Prostate gland (tissue), 2 donors: ENCODE measurements at regions of chr11 and their contacts with region 1.

Region 1: DNA sequence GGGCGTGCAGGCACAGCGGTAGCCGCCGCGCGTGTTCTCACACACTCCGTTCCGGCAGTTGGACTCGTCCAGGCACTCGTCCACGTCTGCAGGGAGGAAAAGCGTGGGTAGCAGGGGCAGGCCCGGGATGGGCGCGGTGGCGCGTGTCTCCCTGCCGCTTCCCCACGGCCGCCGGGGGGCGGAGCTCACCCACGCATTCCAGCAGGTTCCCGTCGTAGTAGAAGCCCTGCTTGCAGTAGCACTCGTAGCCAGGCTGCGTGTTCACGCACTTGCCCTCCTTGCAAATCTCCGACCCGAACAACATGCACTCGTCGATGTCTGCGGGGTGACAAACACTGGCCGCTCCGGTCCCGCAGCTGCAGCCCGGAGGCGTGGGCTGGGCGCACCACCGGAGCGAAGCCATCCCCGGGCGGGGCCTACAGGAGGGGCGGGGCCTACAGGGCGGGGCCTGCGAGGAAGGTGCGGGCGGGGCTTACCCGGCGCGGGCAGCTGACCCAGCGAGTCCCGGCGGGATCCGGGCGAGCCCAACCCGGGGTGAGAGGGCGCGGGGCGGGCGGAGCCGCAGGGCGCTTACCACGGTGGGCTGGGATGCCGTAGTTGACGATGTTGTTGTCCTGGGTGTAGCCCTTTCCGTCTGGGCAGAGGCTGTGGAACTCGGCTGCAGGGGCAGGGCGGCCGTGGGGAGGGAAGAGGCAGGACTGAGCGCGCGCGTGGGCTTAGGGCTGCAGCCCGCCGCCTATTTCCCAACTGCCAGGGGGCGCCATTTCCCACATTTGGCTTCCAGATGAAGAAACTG is 15.6 kb downstream of the SCYL1 start:
- DNase-seq: peak; percentile 84
- H3K4me3 ChIP-seq: peak overlapping the region; percentile 45 to 50
- H3K27ac ChIP-seq: peak overlapping the region; percentile 80 to 89
- H3K4me1 ChIP-seq: peaks cover 17% of the 10 kb centered on the region
- H3K27me3 ChIP-seq: no peaks in the 10 kb centered on the region
- CTCF ChIP-seq: peak; percentile 81 to 98 (median 91)
- POLR2A ChIP-seq: peak; percentile 58

Region 2: DNA sequence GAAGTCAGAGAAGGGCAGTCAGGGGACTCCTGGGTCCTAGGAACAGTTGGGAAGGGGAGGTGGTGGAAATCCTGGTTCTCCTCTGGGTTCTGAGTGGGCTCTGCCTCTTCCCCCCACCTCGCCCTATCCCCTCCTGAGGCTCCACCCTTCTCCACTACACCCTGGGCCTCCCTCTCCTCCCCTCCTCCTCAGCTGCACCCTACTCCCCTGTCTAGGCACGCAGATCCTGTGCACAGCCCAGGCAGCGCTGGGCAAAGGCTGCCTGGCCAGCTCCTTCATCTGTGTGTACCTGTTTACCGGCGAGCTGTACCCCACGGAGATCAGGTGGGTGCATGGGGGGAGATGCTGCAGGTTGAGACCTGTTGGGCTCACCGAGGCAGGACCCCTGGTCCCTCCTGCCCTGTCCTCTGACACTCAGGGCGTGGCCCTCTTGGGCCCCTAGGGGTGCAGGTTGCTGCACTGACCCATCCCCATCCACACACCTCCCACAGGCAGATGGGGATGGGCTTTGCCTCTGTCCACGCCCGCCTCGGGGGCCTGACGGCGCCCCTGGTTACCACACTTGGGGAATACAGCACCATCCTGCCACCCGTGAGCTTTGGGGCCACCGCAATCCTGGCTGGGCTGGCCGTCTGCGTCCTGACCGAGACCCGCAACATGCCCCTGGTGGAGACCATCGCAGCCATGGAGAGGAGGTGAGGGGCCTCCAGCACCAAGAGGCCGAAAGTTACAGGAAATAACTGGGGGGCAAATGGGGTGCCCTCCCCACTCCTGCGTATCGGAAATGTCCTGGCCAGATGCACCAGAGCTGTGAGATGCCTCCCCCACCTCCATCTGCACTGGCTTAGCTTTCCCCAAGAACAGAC is 304.1 kb before region 1 on chr11:
- intact Hi-C with region 1: no loop called
- DNase-seq: no peak
- H3K4me3 ChIP-seq: no peak overlapping the region
- H3K27ac ChIP-seq: no peak overlapping the region
- H3K4me1 ChIP-seq: no peaks in the 10 kb centered on the region
- H3K27me3 ChIP-seq: no peaks in the 10 kb centered on the region
- CTCF ChIP-seq: no peak
- POLR2A ChIP-seq: no peak

Region 3: GRCh38 chr11:65569973-65570918 is 29.8 kb after region 1 on chr11 and contains the start of gene ZNRD2:
- intact Hi-C with region 1: loop called (anchors 2 kb)
- DNase-seq: peak; percentile 97
- H3K4me3 ChIP-seq: peak within 1 kb of the TSS; percentile 68 to 69
- H3K27ac ChIP-seq: peak within 1 kb of the TSS; percentile 96
- H3K4me1 ChIP-seq: peaks cover 37% of the 10 kb centered on the region
- H3K27me3 ChIP-seq: no peaks in the 10 kb centered on the region
- CTCF ChIP-seq: peak in 3 of 4 experiments; percentile 43 to 75 (median 59)
- POLR2A ChIP-seq: peak; percentile 72
- total RNA-seq, gene ZNRD2: 72.8 to 98.1 TPM

Region 4: DNA sequence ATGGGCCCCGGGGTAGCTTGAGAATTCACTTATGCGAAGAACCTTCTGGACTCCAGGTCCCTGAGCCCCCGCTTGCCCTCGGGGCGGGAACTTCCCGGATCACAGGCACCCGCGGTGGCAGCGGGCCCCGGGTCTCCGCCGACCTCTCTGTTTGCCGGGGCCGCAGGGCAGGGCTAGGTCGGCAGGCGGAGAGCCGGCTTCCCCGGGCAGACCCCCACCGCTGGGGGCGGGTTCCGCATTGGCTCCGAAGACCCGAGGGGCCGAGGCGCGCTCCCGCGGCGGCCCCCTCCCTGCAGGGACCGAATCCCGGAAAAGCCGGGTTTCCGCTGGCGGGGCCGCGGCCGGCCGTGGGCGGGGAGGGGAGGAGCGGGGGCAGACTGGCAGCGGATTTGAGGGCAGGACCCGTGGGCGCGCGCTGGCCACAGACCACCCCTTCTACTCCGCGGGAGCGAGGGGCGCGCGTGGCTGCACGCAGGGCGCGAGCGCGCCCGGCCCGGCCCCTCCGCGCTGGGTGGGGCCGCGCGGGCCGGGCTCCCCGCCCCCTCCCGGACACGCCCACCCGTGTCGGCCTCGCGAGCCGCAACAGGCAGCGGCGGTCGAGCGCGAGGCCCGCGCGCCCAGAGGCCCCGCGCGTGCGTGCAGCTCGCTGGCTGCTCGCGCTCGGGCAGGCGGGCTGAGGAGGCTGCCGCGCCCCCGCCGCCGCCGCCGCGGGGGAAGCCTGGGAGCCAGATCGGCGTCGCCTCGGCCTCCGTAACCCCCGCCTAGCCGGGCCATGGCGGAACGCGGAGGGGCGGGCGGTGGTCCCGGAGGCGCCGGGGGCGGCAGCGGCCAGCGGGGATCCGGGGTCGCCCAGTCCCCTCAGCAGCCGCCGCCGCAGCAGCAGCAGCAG is 529.5 kb after region 1 on chr11 and contains the start of gene PACS1:
- intact Hi-C with region 1: no loop called
- DNase-seq: peak; percentile 58
- H3K4me3 ChIP-seq: peak within 1 kb of the TSS; percentile 76 to 93
- H3K27ac ChIP-seq: peak within 1 kb of the TSS; percentile 87 to 95
- H3K4me1 ChIP-seq: peaks cover 5% of the 10 kb centered on the region
- H3K27me3 ChIP-seq: no peaks in the 10 kb centered on the region
- CTCF ChIP-seq: no peak
- POLR2A ChIP-seq: peak; percentile 27
- total RNA-seq, gene PACS1: 51.9 to 107 TPM